ENCODE measurements at regions of chr2 and their contacts with region 1.

Region 1: DNA sequence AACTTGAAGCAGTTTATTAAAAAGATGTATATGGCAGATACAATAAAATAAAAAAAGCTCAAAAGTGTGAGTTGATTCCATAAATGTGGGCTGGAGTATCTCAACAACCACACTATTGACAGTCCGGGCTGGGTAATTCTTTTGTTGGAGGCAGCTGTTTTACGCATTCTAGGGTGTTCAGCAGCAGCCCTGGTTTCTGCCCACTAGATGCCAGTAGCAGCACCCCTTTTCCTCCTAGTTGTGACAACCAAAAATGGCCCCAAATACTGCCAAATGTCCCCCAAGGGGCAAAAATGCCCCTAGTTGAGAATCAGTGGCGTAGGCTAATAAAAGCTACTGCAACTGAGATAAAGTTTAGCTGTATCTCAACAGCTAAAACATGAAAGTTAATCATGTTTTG is 44.8 kb downstream of the CHMP3 start:
- DNase-seq: peak; percentile 14 to 70 (median 32)
- ATAC-seq: peak; percentile 66
- H3K4me3 ChIP-seq: no peak overlapping the region
- H3K4me3 Mint-ChIP-seq: no peak overlapping the region
- H3K27ac ChIP-seq: no peak overlapping the region
- H3K27ac Mint-ChIP-seq: no peak overlapping the region
- H3K4me1 ChIP-seq: no peaks in the 10 kb centered on the region
- H3K4me1 Mint-ChIP-seq: peaks cover 16% of the 10 kb centered on the region
- H3K27me3 ChIP-seq: no peaks in the 10 kb centered on the region
- H3K27me3 Mint-ChIP-seq: no peaks in the 10 kb centered on the region
- CTCF ChIP-seq: peak; percentile 70

Region 2: GRCh38 chr2:86675511-86676015 is 157.1 kb after region 1 on chr2:
- CTCF ChIA-PET with region 1: interaction called, 6 read pairs
- POLR2A ChIA-PET with region 1: interaction called, 3 read pairs
- intact Hi-C with region 1: loop called (anchors 2 to 10 kb)
- DNase-seq: peak in 6 of 14 experiments; percentile 1 to 49 (median 27)
- ATAC-seq: no peak
- H3K4me3 ChIP-seq: no peak overlapping the region
- H3K4me3 Mint-ChIP-seq: no peak overlapping the region
- H3K27ac ChIP-seq: no peak overlapping the region
- H3K27ac Mint-ChIP-seq: no peak overlapping the region
- H3K4me1 ChIP-seq: no peaks in the 10 kb centered on the region
- H3K4me1 Mint-ChIP-seq: no peaks in the 10 kb centered on the region
- H3K27me3 ChIP-seq: no peaks in the 10 kb centered on the region
- H3K27me3 Mint-ChIP-seq: no peaks in the 10 kb centered on the region
- CTCF ChIP-seq: peak; percentile 56

Region 3: DNA sequence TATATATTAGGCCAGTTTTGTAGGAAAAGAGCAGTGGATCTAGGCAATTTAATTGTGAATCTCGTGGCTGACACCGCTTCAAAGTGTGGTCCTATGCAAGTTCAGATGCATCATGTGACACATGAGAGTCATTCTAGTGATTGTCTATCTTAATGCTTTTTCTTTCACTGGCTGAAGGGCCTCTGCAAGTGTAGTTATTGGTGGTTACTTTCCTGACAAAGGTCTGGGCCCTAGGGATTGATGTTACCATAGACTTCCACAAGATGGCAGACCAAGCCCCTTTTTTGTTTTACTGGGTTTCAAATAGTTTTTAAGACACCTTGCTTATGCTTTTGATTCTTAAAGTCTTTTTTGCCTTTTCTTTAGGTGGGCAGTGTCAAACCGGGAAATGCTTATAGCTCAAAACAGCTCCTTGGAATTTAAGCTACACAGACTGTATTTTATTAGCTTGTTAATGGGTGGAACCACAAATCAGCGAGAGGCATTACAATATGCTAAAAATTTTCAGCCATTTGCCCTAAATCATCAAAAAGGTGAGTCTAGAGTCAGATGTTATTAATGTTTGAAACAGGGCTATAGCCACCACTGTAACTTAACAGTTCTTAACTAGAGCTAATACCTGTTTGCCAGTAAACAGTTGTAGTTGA is 246.3 kb after region 1 on chr2:
- CTCF ChIA-PET with region 1: no interaction called
- POLR2A ChIA-PET with region 1: no interaction called
- intact Hi-C with region 1: loop called in 1 of 2 experiments (anchors 5 kb)
- DNase-seq: peak in 5 of 14 experiments; percentile 8 to 65 (median 51)
- ATAC-seq: peak; percentile 62
- H3K4me3 ChIP-seq: no peak overlapping the region
- H3K4me3 Mint-ChIP-seq: no peak overlapping the region
- H3K27ac ChIP-seq: no peak overlapping the region
- H3K27ac Mint-ChIP-seq: peak overlapping the region; percentile 18
- H3K4me1 ChIP-seq: no peaks in the 10 kb centered on the region
- H3K4me1 Mint-ChIP-seq: peaks cover 25% of the 10 kb centered on the region
- H3K27me3 ChIP-seq: no peaks in the 10 kb centered on the region
- H3K27me3 Mint-ChIP-seq: no peaks in the 10 kb centered on the region
- CTCF ChIP-seq: peak; percentile 59

Measured in CD4-positive, alpha-beta T cell (primary cell).